ENCODE measurements at regions of chr5 and their contacts with region 1.

Region 1: GRCh38 chr5:114223866-114224265 is 138.0 kb upstream of the KCNN2 start:
- DNase-seq: peak; percentile 35
- H3K4me3 ChIP-seq: no peak overlapping the region
- H3K27ac ChIP-seq: no peak overlapping the region
- H3K4me1 ChIP-seq: no peaks in the 10 kb centered on the region
- H3K27me3 ChIP-seq: peaks cover 2% of the 10 kb centered on the region
- CTCF ChIP-seq: peak; percentile 67 to 77

Region 2: GRCh38 chr5:113612060-113612496 is 611.8 kb before region 1 on chr5:
- CTCF ChIA-PET with region 1: no interaction called
- dilution Hi-C with region 1: no loop called
- in situ Hi-C with region 1: no loop called
- intact Hi-C with region 1: loop called (anchors 2 kb)
- DNase-seq: peak; percentile 30
- H3K4me3 ChIP-seq: no peak overlapping the region
- H3K27ac ChIP-seq: no peak overlapping the region
- H3K4me1 ChIP-seq: peaks cover 7% of the 10 kb centered on the region
- H3K27me3 ChIP-seq: no peaks in the 10 kb centered on the region
- CTCF ChIP-seq: peak; percentile 58 to 62

Region 3: GRCh38 chr5:114101153-114101552 is 122.7 kb before region 1 on chr5:
- CTCF ChIA-PET with region 1: no interaction called
- dilution Hi-C with region 1: no loop called
- in situ Hi-C with region 1: no loop called
- intact Hi-C with region 1: loop called (anchors 1 kb)
- DNase-seq: peak; percentile 17
- H3K4me3 ChIP-seq: no peak overlapping the region
- H3K27ac ChIP-seq: no peak overlapping the region
- H3K4me1 ChIP-seq: no peaks in the 10 kb centered on the region
- H3K27me3 ChIP-seq: no peaks in the 10 kb centered on the region
- CTCF ChIP-seq: peak; percentile 75 to 76

Measured in mammary epithelial cell (primary cell).